Left ventricle myocardium inferior (tissue), 1 donor: ENCODE measurements at regions of chr17 and their contacts with region 1.

Region 1: GRCh38 chr17:50161023-50161910 is 4.5 kb upstream of the SGCA start:
- DNase-seq: peak; percentile 92
- H3K4me3 ChIP-seq: peak overlapping the region; percentile 75
- H3K27ac ChIP-seq: peak overlapping the region; percentile 76
- H3K4me1 ChIP-seq: peaks cover 39% of the 10 kb centered on the region
- H3K27me3 ChIP-seq: no peaks in the 10 kb centered on the region
- CTCF ChIP-seq: peak; percentile 95

Region 2: DNA sequence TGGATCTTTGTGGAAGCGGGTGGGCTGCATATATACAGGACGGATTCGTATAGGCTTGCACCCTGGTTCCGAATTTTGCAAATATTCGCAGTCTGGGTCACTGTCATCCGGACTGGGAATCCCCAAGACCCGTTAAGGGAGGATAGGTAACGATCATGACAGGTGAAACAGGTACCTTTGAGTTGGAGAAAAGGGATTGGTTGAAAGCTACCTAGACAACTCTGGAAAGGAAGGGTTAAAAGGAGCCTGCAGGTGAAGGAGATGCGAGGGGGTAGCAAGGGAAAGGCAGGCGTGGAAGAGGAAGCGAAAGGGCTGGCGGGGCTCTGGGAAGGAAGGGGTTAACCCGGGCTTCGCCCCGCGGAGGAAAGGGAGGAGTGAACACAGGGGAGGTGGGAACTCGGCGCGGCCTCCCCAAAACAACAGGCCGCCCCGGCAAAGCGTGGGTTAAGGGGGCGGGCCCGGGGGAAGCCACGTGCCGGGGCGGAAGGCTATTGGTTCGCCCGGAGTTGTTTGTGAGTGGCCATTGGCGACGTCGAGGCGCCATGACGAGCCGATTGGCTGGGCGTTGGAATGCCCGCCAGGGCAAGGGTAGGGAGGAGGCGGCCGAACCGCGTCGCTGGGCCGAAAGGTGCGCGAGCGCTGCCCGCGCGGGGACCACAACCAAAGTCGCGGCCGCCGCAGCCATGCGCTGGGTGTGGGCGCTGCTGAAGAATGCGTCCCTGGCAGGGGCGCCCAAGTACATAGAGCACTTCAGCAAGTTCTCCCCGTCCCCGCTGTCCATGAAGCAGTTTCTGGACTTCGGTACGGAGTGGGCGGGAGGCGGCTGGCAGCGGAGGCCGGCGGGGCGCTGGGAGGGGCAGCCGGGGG is 66.3 kb before region 1 on chr17 and contains the start of gene PDK2:
- intact Hi-C with region 1: loop called (anchors 10 kb)
- DNase-seq: peak; percentile 97
- H3K4me3 ChIP-seq: peak within 1 kb of the TSS; percentile 99
- H3K27ac ChIP-seq: peak within 1 kb of the TSS; percentile 97
- H3K4me1 ChIP-seq: peaks cover 59% of the 10 kb centered on the region
- H3K27me3 ChIP-seq: no peaks in the 10 kb centered on the region
- CTCF ChIP-seq: no peak
- total RNA-seq, gene PDK2: 206 TPM